Sciatic nerve (tissue), 2 donors: ENCODE measurements at regions of chr21 and their contacts with region 1.

Region 1: DNA sequence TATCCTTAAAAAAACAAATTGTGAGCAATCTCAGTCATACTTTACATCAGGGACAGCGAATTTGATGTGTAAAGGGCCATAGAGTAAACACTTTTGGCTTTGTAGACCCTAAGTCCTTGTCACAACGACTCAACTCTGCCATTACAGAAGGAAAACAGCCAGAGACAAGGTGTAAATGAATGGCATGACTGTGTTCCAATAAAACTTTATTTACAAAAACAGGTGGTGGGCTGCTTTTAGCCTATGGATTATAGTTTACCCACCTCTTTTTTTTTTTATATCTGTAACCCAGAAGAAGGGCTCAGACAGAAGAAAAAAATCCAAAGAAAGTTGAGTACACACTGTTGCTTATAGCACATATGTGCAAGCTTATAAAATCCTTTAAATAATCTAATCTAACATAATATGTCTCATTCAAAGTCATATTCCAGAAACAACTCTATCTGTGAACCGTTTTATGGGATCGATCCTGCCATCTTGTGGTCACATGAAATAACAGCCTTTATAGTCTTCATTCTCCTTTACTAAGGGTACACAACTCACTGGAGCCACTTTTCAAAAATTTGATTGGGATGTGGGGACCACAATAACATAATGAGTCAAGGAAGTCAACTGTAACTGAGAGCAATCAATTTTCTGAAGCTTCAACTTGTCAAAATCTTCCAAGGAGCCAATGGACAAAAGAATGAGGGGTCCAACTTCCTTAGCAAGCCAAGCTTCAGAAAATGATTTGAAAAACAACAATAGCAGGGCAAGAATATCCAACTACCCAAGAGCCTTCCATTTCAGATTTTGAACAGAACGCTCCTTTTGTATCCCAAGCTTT is 142.2 kb upstream of the KRTAP19-8 start:
- DNase-seq: no peak
- ATAC-seq: peak; percentile 72

Region 2: DNA sequence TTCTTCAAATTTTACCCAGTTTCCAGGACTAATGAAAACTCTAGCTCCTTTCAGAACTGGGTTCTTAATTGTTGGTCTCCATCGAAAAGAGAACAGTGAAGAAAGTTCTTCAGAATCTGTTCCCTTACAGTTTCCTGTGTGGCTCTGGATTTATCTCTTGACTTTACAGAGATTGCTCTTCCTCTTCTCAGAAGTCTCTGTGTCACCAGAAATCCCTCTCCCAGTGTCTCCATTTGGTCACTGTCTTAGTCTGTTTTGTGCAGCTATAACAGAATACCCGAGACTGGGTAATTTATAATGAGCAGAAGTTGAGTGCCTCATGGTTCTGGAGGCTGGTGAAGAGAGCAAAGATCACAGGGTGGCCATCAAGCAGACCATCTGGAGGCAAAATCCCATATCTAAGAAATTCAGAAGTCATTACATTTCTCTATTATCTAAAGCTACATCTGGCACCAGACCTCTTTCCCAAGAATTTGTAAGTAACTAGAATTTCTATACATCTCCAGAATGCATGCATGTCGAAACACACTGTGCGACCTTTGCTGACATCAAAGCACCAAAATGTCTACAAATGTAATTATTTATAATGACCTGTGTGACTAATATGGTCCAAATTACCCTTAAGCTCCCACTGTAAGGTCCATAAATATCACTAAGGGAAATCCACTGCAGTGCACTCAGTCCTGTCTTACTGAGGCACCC is 76.7 kb before region 1 on chr21:
- intact Hi-C with region 1: loop called (anchors 5 kb)
- DNase-seq: no peak
- ATAC-seq: no peak

Region 3: GRCh38 chr21:31354604-31355443 is 174.4 kb after region 1 on chr21:
- intact Hi-C with region 1: no loop called
- DNase-seq: no peak
- ATAC-seq: peak; percentile 38